ENCODE measurements at regions of chr3 and their contacts with region 1.

Region 1: DNA sequence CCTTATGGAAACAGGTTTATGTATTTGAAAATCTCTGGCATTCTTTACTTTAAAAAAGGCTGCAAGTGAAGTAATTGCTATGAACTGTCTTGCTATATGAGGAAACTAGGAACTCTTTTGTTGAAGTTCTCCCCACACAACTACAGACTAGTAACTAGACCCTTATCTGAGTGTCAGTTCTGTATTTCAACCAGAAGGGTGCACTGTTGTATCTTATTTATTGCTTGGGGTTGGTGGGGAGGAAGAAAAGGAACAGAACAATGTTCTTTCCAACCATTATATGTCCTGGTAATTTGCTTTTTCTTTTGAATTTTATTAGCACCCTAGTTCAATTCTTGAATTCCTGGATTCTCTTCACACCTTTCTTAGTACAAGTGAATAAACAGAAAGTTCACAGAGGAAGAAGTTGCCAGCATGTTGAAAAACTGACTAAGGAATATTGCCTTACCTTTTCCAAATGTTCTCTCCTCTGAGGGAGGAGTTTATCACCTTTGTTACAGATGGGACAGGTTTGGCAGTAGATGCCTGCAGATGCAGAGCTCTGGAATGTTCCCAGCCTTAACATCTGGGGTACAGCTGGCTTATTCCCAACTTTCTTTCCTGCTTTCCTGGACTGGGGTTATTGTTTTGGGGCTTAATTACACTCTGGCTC is 162.4 kb upstream of the CFAP20DC start:
- DNase-seq: peak in 2 of 5 donors; percentile 27 to 41
- H3K4me3 ChIP-seq: no peak overlapping the region
- H3K4me3 Mint-ChIP-seq: no peak overlapping the region
- H3K27ac ChIP-seq: no peak overlapping the region
- H3K27ac Mint-ChIP-seq: no peak overlapping the region
- H3K4me1 ChIP-seq: no peaks in the 10 kb centered on the region
- H3K4me1 Mint-ChIP-seq: no peaks in the 10 kb centered on the region
- H3K27me3 ChIP-seq: no peaks in the 10 kb centered on the region
- H3K27me3 Mint-ChIP-seq: peaks cover 0 to 29% of the 10 kb centered on the region in 2 donors

Region 2: DNA sequence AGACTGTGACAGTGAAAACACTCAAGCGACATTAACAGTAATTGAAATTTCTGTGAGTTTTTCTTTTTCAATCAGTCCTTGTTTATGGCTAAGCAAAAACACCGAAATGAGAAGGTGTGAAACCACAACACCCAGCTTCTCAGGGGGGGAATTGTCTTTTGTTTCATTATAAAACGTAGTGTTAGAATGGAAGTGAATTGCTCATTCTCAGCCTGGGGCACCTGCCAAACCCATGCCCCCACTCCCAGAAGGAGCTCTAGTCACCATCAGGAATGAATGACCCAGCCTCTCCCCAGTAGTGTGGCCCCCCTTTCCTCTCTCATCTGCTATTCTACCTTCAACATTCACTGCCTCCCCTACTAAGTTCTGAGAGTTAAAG is 23.4 kb after region 1 on chr3:
- CTCF ChIA-PET with region 1: no interaction called
- POLR2A ChIA-PET with region 1: no interaction called
- DNase-seq: peak in 3 of 5 donors; percentile 2 to 60 (median 34)
- H3K4me3 ChIP-seq: no peak overlapping the region
- H3K4me3 Mint-ChIP-seq: peak overlapping the region; percentile 8 to 70 (median 56)
- H3K27ac ChIP-seq: no peak overlapping the region
- H3K27ac Mint-ChIP-seq: peak overlapping the region in 6 of 8 donors; percentile 1 to 50 (median 38)
- H3K4me1 ChIP-seq: peaks cover 9% of the 10 kb centered on the region
- H3K4me1 Mint-ChIP-seq: peaks cover 22 to 24% (median 22%) of the 10 kb centered on the region in 3 donors
- H3K27me3 ChIP-seq: no peaks in the 10 kb centered on the region
- H3K27me3 Mint-ChIP-seq: peaks cover 16% of the 10 kb centered on the region in 2 donors

Region 3: GRCh38 chr3:59262076-59262498 is 49.8 kb after region 1 on chr3:
- CTCF ChIA-PET with region 1: no interaction called
- POLR2A ChIA-PET with region 1: no interaction called
- DNase-seq: no peak
- H3K4me3 ChIP-seq: no peak overlapping the region
- H3K4me3 Mint-ChIP-seq: no peak overlapping the region
- H3K27ac ChIP-seq: no peak overlapping the region
- H3K27ac Mint-ChIP-seq: no peak overlapping the region
- H3K4me1 ChIP-seq: no peaks in the 10 kb centered on the region
- H3K4me1 Mint-ChIP-seq: no peaks in the 10 kb centered on the region
- H3K27me3 ChIP-seq: no peaks in the 10 kb centered on the region
- H3K27me3 Mint-ChIP-seq: no peaks in the 10 kb centered on the region

Region 4: DNA sequence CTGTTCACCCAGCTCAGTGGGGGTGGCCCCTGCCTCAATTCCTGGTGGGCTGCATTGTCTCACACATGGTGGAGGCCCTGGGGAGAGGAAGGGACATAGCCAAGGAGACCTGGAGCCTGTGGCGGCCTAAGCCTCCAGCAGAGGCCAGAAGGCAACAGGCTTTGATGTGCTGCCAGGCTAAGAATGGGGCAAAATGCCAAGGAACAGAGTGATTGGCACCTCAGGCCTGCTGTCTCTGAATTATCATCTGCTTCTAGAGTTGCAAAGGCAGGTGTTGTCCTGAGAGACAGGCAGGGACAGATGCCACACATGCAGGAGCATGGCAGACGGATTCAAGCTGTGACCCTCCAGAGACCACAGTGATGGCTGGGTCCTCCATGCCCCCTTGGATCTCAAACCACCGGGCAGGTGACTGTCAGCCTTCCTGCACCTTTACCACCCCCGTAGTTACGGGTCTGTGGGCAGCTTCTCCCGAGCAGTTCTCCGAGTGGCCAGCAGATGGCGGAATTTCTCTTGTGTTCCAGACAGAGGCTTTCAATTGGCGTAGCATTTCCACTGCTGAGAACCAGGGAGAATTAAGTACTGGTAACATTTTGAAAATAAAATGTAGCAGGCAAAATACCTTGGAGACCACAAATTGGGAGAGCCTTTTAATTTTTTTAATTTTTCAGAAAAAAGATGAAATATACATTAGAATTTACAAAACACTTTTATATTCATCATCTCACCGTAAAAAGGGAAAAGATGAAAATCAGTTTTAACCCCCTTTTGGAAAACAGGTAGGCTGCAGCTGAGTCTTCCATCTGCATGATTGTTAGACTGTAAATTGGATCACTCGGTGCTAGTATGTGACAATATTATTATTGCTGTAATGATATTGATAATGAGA is 363.1 kb after region 1 on chr3:
- CTCF ChIA-PET with region 1: interaction called, 10 read pairs
- POLR2A ChIA-PET with region 1: no interaction called
- DNase-seq: peak; percentile 68 to 87 (median 77)
- H3K4me3 ChIP-seq: no peak overlapping the region
- H3K4me3 Mint-ChIP-seq: no peak overlapping the region
- H3K27ac ChIP-seq: no peak overlapping the region
- H3K27ac Mint-ChIP-seq: no peak overlapping the region
- H3K4me1 ChIP-seq: peaks cover 9% of the 10 kb centered on the region
- H3K4me1 Mint-ChIP-seq: peaks cover 0 to 4% (median 0%) of the 10 kb centered on the region in 3 donors
- H3K27me3 ChIP-seq: no peaks in the 10 kb centered on the region
- H3K27me3 Mint-ChIP-seq: no peaks in the 10 kb centered on the region

Region 5: GRCh38 chr3:59857589-59858346 is 645.5 kb after region 1 on chr3:
- CTCF ChIA-PET with region 1: interaction called, 11 read pairs
- POLR2A ChIA-PET with region 1: no interaction called
- DNase-seq: peak; percentile 60 to 76 (median 62)
- H3K4me3 ChIP-seq: no peak overlapping the region
- H3K4me3 Mint-ChIP-seq: peak overlapping the region in 2 of 7 donors; percentile 7 to 42
- H3K27ac ChIP-seq: no peak overlapping the region
- H3K27ac Mint-ChIP-seq: peak overlapping the region in 1 of 8 donors; percentile 40
- H3K4me1 ChIP-seq: peaks cover 8% of the 10 kb centered on the region
- H3K4me1 Mint-ChIP-seq: peaks cover 4 to 6% (median 5%) of the 10 kb centered on the region in 3 donors
- H3K27me3 ChIP-seq: no peaks in the 10 kb centered on the region
- H3K27me3 Mint-ChIP-seq: peaks cover 0 to 4% of the 10 kb centered on the region in 2 donors

Measured in CD8-positive, alpha-beta memory T cell (primary cell).